ENCODE measurements at regions of chr2 and their contacts with region 1.

Region 1: DNA sequence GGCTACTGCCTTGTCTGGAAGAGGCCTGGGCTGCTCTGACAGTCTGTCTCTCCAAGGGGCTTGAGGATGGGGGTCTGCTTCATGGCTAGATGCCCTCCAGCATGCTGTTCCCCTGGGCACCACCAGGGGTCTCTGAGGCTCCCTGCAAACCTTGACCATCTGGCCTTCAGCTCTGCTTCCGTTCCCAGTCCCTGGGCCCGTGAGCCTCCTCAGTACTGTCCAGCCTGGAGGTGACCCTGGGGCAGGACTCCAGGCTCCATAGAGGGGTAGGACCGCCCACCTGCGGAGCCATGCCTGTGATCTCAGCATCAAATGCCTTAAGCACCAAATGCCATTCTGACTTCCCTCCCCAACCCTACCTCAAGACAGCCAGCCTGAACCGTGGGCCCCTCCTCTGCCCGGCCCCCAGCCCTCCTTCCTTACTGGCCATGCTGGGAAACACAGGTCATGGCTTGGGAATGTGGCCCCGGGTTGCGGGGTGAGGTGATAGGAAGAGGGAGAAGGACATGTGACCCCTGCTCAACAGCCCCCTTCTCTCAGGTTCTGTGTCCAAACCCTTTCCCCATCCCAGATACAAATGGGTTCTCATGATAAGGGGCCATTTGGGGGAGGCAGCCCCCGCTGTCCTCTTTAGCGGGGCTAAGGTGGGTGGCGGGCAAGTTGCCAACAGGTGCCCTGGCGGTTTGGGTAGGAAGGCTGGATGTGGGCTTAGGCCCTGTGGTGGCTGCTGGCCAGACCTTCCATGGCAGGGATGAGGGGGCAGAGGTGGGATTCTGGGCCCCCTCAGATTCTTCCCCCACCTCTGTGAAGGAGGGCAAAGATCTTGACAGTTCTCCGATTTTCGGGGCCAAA is 25.0 kb downstream of the SPEG start:
- DNase-seq: no peak
- H3K4me3 ChIP-seq: no peak overlapping the region
- CTCF ChIP-seq: peak; percentile 96

Region 2: DNA sequence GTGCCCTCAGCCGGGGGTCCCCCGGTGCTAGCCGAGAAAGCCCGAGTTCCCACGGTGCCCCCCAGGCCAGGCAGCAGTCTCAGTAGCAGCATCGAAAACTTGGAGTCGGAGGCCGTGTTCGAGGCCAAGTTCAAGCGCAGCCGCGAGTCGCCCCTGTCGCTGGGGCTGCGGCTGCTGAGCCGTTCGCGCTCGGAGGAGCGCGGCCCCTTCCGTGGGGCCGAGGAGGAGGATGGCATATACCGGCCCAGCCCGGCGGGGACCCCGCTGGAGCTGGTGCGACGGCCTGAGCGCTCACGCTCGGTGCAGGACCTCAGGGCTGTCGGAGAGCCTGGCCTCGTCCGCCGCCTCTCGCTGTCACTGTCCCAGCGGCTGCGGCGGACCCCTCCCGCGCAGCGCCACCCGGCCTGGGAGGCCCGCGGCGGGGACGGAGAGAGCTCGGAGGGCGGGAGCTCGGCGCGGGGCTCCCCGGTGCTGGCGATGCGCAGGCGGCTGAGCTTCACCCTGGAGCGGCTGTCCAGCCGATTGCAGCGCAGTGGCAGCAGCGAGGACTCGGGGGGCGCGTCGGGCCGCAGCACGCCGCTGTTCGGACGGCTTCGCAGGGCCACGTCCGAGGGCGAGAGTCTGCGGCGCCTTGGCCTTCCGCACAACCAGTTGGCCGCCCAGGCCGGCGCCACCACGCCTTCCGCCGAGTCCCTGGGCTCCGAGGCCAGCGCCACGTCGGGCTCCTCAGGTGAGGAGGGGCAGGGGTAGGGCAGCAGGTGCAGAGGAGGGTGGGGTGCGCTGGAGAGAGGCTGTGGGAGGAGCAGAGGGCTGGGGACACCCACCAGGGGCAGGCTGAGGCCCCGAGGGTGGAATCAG is 24.9 kb after region 1 on chr2:
- CTCF ChIA-PET with region 1: interaction called, 238 read pairs
- POLR2A ChIA-PET with region 1: interaction called, 3 read pairs
- DNase-seq: no peak
- H3K4me3 ChIP-seq: no peak overlapping the region
- CTCF ChIP-seq: no peak